IMR-90 (cell line): ENCODE measurements at regions of chr10 and their contacts with region 1.

Region 1: GRCh38 chr10:103481974-103482531 is 3.0 kb upstream of the CALHM3 start:
- DNase-seq: peak; percentile 69
- ATAC-seq: peak; percentile 76
- H3K4me3 ChIP-seq: no peak overlapping the region
- H3K27ac ChIP-seq: no peak overlapping the region
- H3K4me1 ChIP-seq: no peaks in the 10 kb centered on the region; the same call in 1 of the 2 replicates
- H3K27me3 ChIP-seq: peaks cover 23% of the 10 kb centered on the region
- CTCF ChIP-seq: peak; percentile 59
- POLR2A ChIP-seq: no peak
- RAD21 ChIP-seq: peak; percentile 48

Region 2: DNA sequence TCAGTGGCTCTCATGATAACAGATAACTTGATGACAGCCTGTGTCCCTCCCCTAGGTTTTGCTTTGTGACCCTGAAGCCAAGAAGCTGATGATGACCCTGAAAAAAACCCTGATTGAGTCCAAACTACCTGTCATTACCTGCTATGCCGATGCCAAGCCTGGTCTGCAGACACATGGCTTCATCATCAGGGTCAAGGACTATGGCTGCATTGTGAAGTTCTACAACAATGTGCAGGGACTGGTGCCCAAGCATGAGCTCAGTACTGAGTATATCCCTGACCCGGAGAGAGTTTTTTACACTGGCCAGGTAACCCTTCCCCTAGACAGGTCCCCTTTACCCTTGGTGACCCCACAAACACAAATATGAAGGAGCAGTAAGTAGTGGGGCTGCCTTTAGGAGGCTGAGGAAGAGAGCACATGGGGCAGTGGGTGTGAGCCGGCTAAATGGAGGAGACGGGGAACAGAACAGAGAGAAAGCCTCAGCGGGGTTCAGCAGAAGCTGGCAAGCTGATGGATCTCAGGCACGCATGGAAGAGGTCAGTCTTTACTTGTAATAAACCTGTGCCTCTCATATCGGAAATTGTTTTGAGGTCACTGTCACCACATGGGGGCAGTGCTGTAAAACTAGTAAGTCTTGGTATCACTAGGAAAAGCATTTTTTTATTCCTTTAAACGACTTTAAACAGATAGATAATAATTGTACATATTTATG is 65.5 kb before region 1 on chr10:
- CTCF ChIA-PET with region 1: no interaction called
- POLR2A ChIA-PET with region 1: no interaction called
- dilution Hi-C with region 1: no loop called
- in situ Hi-C with region 1: loop called (anchors 5 kb)
- intact Hi-C with region 1: loop called (anchors 1 kb)
- DNase-seq: peak; percentile 65
- ATAC-seq: peak; percentile 77
- H3K4me3 ChIP-seq: no peak overlapping the region
- H3K27ac ChIP-seq: no peak overlapping the region
- H3K4me1 ChIP-seq: no peaks in the 10 kb centered on the region
- H3K27me3 ChIP-seq: no peaks in the 10 kb centered on the region
- CTCF ChIP-seq: peak; percentile 53
- POLR2A ChIP-seq: no peak
- RAD21 ChIP-seq: peak; percentile 63

Region 3: GRCh38 chr10:103431902-103432301 is 50.2 kb before region 1 on chr10:
- CTCF ChIA-PET with region 1: interaction called, 4 read pairs
- POLR2A ChIA-PET with region 1: no interaction called
- dilution Hi-C with region 1: no loop called
- in situ Hi-C with region 1: no loop called
- intact Hi-C with region 1: loop called (anchors 1 kb)
- DNase-seq: peak; percentile 46
- ATAC-seq: peak; percentile 96
- H3K4me3 ChIP-seq: no peak overlapping the region
- H3K27ac ChIP-seq: no peak overlapping the region
- H3K4me1 ChIP-seq: no peaks in the 10 kb centered on the region
- H3K27me3 ChIP-seq: no peaks in the 10 kb centered on the region
- CTCF ChIP-seq: no peak
- POLR2A ChIP-seq: no peak
- RAD21 ChIP-seq: no peak

Region 4: GRCh38 chr10:103637927-103638557 is 156.0 kb after region 1 on chr10:
- CTCF ChIA-PET with region 1: no interaction called
- POLR2A ChIA-PET with region 1: no interaction called
- dilution Hi-C with region 1: no loop called
- in situ Hi-C with region 1: no loop called
- intact Hi-C with region 1: no loop called
- DNase-seq: peak; percentile 92
- ATAC-seq: peak; percentile 69
- H3K4me3 ChIP-seq: no peak overlapping the region
- H3K27ac ChIP-seq: peak overlapping the region; percentile 40
- H3K4me1 ChIP-seq: peaks cover 23% of the 10 kb centered on the region
- H3K27me3 ChIP-seq: no peaks in the 10 kb centered on the region
- CTCF ChIP-seq: no peak
- POLR2A ChIP-seq: no peak
- RAD21 ChIP-seq: no peak

Region 5: DNA sequence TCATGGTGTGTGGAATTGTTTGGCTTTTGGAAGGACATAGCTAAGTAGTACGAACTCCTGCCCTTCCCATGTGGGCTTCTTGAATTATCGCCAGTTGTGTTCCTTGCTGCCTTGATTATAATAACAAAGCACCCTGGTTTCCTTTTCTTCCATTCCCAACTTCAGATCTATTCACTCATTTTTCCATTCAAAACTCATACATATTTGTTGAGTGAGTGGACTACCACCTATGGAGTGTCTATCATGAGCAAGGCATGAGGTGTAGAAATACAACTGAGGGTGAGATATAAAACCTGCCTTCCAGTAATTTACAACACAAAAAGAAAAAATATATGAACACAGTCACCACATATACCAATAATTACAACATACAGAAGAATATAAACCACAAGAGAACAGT is 608.6 kb after region 1 on chr10:
- CTCF ChIA-PET with region 1: no interaction called
- POLR2A ChIA-PET with region 1: no interaction called
- dilution Hi-C with region 1: no loop called
- in situ Hi-C with region 1: no loop called
- intact Hi-C with region 1: no loop called
- DNase-seq: peak; percentile 16
- ATAC-seq: no peak
- H3K4me3 ChIP-seq: no peak overlapping the region
- H3K27ac ChIP-seq: no peak overlapping the region
- H3K4me1 ChIP-seq: no peaks in the 10 kb centered on the region; the same call in 1 of the 2 replicates
- H3K27me3 ChIP-seq: no peaks in the 10 kb centered on the region; the same call in 1 of the 2 replicates
- CTCF ChIP-seq: no peak
- POLR2A ChIP-seq: no peak
- RAD21 ChIP-seq: no peak